ENCODE measurements at regions of chr6 and their contacts with region 1.

Region 1: GRCh38 chr6:126033696-126034095 is 47.4 kb downstream of the TRMT11 start:
- DNase-seq: peak in 1 of 3 donors; percentile 29
- ATAC-seq: peak; percentile 93 to 95
- H3K4me3 ChIP-seq: no peak overlapping the region
- H3K27ac ChIP-seq: no peak overlapping the region
- H3K4me1 ChIP-seq: peaks cover 2% of the 10 kb centered on the region
- H3K27me3 ChIP-seq: no peaks in the 10 kb centered on the region

Region 2: DNA sequence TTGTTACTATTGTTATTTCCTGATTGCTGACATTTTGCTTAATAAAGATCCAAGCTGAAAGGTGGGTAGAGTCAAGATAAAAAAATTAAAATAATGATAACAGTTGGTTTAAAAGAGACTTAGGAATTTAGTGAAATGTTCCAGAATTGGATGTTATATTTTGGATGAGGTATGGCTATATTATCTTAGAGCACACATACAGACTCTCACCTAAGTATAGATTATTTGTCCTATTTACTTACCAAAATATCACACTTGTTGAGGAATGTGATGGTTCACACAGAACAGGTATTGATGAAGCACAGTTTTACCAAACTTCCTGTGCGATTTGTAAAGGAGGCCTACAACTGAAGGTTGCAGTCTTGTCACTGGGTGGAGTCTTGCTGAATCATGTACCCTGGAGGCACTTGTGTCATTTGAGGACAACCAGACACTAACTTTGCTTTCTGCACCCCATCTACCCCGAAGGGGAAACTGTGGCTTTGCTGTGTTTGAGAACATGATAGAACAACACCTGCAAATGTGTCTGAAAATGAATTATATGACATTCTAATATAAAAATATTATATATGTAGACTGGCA is 109.6 kb before region 1 on chr6:
- intact Hi-C with region 1: no loop called
- DNase-seq: no peak
- ATAC-seq: no peak
- H3K4me3 ChIP-seq: no peak overlapping the region
- H3K27ac ChIP-seq: no peak overlapping the region
- H3K4me1 ChIP-seq: peaks cover 4% of the 10 kb centered on the region
- H3K27me3 ChIP-seq: no peaks in the 10 kb centered on the region

Region 3: DNA sequence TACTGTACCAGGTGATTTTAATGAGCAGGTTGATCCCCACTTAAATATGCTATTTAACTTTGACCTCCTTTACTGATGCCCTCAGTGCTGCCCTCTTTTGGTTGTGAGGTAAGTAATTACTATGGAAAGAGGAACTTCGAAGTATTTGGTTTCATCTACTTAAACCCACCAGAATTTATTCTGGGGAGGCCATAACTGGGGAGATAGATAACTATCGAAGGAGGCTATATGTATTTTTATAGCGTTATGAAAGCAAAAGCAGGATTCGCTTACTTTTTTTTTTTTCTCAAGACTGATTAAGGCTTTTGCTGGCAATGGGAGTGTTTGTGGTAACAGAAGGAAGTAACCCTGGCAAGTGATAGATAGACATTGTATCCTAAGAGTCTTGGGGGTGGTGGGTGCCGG is 137.3 kb after region 1 on chr6:
- intact Hi-C with region 1: loop called in 1 of 4 experiments (anchors 5 kb)
- DNase-seq: no peak
- ATAC-seq: no peak
- H3K4me3 ChIP-seq: no peak overlapping the region
- H3K27ac ChIP-seq: no peak overlapping the region
- H3K4me1 ChIP-seq: no peaks in the 10 kb centered on the region
- H3K27me3 ChIP-seq: no peaks in the 10 kb centered on the region

Region 4: GRCh38 chr6:126657561-126658175 is 624.0 kb after region 1 on chr6:
- intact Hi-C with region 1: loop called in 1 of 4 experiments (anchors 10 kb)
- DNase-seq: no peak
- ATAC-seq: no peak
- H3K4me3 ChIP-seq: no peak overlapping the region
- H3K27ac ChIP-seq: no peak overlapping the region
- H3K4me1 ChIP-seq: no peaks in the 10 kb centered on the region
- H3K27me3 ChIP-seq: no peaks in the 10 kb centered on the region